BJ (cell line): ENCODE measurements at regions of chr10 and their contacts with region 1.

Region 1: GRCh38 chr10:23158370-23158769 is 33.7 kb upstream of the PTF1A start:
- DNase-seq: no peak
- H3K4me3 ChIP-seq: no peak overlapping the region
- H3K27me3 ChIP-seq: peaks cover 2% of the 10 kb centered on the region; the same call in 1 of the 2 replicates
- CTCF ChIP-seq: peak; percentile 89

Region 2: GRCh38 chr10:23146258-23146657 is 12.1 kb before region 1 on chr10:
- CTCF ChIA-PET with region 1: interaction called, 12 read pairs
- POLR2A ChIA-PET with region 1: no interaction called
- DNase-seq: no peak
- H3K4me3 ChIP-seq: no peak overlapping the region
- H3K27me3 ChIP-seq: no peaks in the 10 kb centered on the region
- CTCF ChIP-seq: no peak

Region 3: GRCh38 chr10:23171223-23171876 is 13.0 kb after region 1 on chr10:
- CTCF ChIA-PET with region 1: interaction called, 32 read pairs
- POLR2A ChIA-PET with region 1: no interaction called
- DNase-seq: no peak
- H3K4me3 ChIP-seq: no peak overlapping the region
- H3K27me3 ChIP-seq: peaks cover 21% of the 10 kb centered on the region
- CTCF ChIP-seq: no peak

Region 4: DNA sequence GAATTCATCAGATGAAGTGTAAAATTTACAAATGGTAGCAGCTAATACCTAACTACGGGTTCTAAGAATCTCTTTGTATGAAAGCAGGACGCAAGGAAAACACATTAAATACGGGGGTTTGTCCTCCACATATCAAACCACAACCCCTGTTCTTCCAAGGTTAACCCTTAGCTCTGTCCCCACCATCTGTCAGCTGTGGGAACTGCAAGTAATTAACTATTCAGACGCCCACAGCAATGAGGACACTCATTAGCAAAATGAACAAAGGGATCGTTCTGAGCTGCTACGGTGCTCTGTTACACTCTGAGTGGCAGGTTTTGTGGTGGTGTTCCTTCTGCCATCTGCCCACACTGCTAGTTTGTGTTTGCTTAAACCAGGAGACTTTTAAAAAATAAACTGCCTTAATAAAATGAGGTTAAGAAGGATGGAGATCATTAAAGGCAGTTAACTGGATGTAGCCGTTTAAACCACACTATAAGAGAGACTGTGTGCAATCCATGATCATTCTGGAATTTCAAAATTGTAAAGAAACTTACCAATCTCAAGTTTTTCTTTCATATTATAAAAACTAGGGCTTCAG is 134.9 kb after region 1 on chr10:
- CTCF ChIA-PET with region 1: interaction called, 23 read pairs
- POLR2A ChIA-PET with region 1: no interaction called
- DNase-seq: no peak
- H3K4me3 ChIP-seq: no peak overlapping the region
- H3K27me3 ChIP-seq: no peaks in the 10 kb centered on the region; the same call in 1 of the 2 replicates
- CTCF ChIP-seq: peak; percentile 60

Region 5: GRCh38 chr10:23702977-23703414 is 544.6 kb after region 1 on chr10:
- CTCF ChIA-PET with region 1: interaction called, 13 read pairs
- POLR2A ChIA-PET with region 1: no interaction called
- DNase-seq: no peak
- H3K4me3 ChIP-seq: no peak overlapping the region
- H3K27me3 ChIP-seq: no peaks in the 10 kb centered on the region
- CTCF ChIP-seq: peak; percentile 66